Calu3 (cell line): ENCODE measurements at regions of chr17 and their contacts with region 1.

Region 1: GRCh38 chr17:47323382-47324222 is at the start of gene EFCAB13:
- DNase-seq: peak; percentile 99
- H3K4me3 Mint-ChIP-seq: peak within 1 kb of the TSS; percentile 81
- H3K27ac Mint-ChIP-seq: peak within 1 kb of the TSS; percentile 90
- H3K4me1 Mint-ChIP-seq: peaks cover 14% of the 10 kb centered on the region
- H3K27me3 Mint-ChIP-seq: no peaks in the 10 kb centered on the region
- CTCF ChIP-seq: no peak
- total RNA-seq, gene EFCAB13: 21.5 and 25.2 TPM in 2 replicates

Region 2: DNA sequence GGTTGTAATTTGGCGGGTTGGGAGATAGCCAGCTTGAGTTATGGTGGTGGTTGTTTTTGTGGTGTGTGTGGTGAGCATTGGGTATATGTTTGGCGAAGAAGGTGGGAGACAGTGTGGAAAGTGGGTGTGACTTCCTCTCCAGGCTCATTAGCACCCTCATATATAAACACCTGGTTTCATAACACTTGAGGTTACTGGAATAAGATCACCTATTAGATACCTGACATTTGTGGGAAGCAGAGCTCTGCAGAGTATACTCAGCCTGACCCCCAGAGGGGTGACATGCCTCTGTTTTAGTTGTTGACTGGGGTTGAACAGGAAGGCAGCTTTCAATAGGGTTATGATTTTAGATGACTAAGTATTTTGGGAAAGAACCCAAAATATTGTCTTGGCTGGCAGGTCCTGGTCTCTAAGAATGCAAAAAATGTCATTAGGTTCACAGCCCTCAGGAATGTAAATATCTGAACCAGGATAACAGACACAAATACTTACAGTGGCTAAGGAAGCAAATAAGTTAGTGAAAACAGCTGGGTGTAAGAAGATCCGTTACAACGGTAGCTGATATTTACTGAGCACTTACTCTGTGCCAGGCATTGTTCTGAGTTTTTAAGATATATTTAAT is 18.2 kb before region 1 on chr17:
- CTCF ChIA-PET with region 1: interaction called, 14 read pairs
- intact Hi-C with region 1: no loop called
- DNase-seq: peak; percentile 80
- H3K4me3 Mint-ChIP-seq: no peak overlapping the region
- H3K27ac Mint-ChIP-seq: peak overlapping the region; percentile 34
- H3K4me1 Mint-ChIP-seq: peaks cover 52% of the 10 kb centered on the region
- H3K27me3 Mint-ChIP-seq: peaks cover 28% of the 10 kb centered on the region
- CTCF ChIP-seq: no peak